ENCODE measurements at regions of chr1 and their contacts with region 1.

Region 1: GRCh38 chr1:9867408-9868243 is 42.4 kb downstream of the CTNNBIP1 start:
- DNase-seq: peak; percentile 77 to 94 (median 88)
- H3K4me3 ChIP-seq: no peak overlapping the region
- H3K27ac ChIP-seq: peak overlapping the region in 5 of 59 donors; percentile 12 to 51 (median 31)
- H3K27me3 ChIP-seq: no peaks in the 10 kb centered on the region
- CTCF ChIP-seq: peak; percentile 94 to 100 (median 98)

Region 2: GRCh38 chr1:9629445-9630201 is 238.0 kb before region 1 on chr1:
- intact Hi-C with region 1: loop called (anchors 2 to 10 kb)
- DNase-seq: no peak
- H3K4me3 ChIP-seq: peak overlapping the region in 1 of 59 donors; percentile 9
- H3K27ac ChIP-seq: peak overlapping the region in 8 of 59 donors; percentile 4 to 38 (median 16)
- H3K27me3 ChIP-seq: no peaks in the 10 kb centered on the region
- CTCF ChIP-seq: no peak

Region 3: GRCh38 chr1:9724706-9725476 is 142.7 kb before region 1 on chr1:
- intact Hi-C with region 1: loop called (anchors 5 kb)
- DNase-seq: peak in 4 of 10 donors; percentile 38 to 49 (median 41)
- H3K4me3 ChIP-seq: no peak overlapping the region
- H3K27ac ChIP-seq: peak overlapping the region in 6 of 59 donors; percentile 4 to 34 (median 16)
- H3K27me3 ChIP-seq: no peaks in the 10 kb centered on the region
- CTCF ChIP-seq: peak in 55 of 56 donors; percentile 41 to 88 (median 71)

Measured in dorsolateral prefrontal cortex (tissue), 120 donors.